ENCODE measurements at regions of chr2 and their contacts with region 1.

Region 1: DNA sequence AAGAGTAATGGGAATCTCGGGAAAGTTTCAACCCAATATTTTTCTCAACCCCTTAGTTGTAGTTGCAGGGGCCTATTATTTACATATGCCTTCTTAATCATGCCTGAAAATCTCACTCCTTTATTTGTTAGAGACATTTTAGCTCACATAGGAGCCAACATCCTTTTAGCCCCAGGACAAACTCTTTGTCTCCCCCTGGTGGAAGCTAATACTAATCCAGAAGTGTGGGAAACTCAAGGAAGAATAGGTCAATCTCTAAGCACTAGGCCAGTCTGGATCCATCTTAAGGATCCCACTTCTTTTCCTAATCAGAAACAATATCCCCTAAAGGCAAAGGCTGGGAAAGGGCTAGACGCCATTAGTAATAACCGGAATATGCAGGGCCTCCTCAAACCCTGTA is 550.9 kb upstream of the PKDCC start:
- DNase-seq: no peak
- ATAC-seq: peak in 1 of 3 donors; percentile 56
- H3K4me3 ChIP-seq: no peak overlapping the region
- H3K4me3 Mint-ChIP-seq: no peak overlapping the region
- H3K27ac ChIP-seq: no peak overlapping the region
- H3K27ac Mint-ChIP-seq: no peak overlapping the region
- H3K4me1 ChIP-seq: no peaks in the 10 kb centered on the region
- H3K4me1 Mint-ChIP-seq: no peaks in the 10 kb centered on the region
- H3K27me3 ChIP-seq: no peaks in the 10 kb centered on the region
- H3K27me3 Mint-ChIP-seq: peaks cover 0 to 2% of the 10 kb centered on the region in 2 donors
- CTCF ChIP-seq: peak; percentile 56

Region 2: DNA sequence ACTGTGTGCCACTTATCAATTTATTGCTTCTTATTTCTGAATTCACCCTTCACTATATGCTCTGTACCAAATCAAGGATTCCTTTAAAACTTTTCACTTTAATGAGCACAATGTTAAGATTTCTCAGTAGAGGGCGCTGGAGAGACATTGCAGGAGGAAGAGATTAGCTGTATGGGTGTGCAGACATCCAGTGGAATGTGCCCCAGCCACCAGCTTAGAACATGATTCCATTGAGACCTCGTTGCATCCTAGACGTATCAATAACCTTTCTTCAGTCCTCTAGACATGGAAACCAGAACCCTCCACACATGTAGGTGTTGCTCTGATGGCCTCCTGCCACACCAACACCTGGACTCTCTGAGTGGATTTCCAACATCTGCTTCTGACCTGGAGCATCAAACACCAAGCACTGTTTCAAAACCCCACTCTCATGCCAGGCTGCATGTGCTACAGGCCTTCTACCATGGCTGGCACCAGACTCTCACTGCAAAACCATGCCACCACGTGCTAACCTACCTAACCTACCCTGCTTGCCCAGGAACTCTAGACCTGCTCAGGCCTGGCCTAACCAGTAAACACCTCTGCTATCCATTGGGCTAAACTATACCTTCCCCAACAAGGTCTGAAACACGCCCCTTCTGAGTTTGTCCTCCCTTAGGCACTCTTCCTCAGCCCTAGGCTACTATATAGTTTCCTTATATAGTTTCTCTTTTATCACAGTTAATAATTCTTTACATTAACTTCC is 82.2 kb before region 1 on chr2:
- intact Hi-C with region 1: loop called (anchors 1 kb)
- DNase-seq: peak; percentile 8 to 14
- ATAC-seq: peak; percentile 46 to 81 (median 54)
- H3K4me3 ChIP-seq: no peak overlapping the region
- H3K4me3 Mint-ChIP-seq: no peak overlapping the region
- H3K27ac ChIP-seq: no peak overlapping the region
- H3K27ac Mint-ChIP-seq: peak overlapping the region in 1 of 2 donors; percentile 44
- H3K4me1 ChIP-seq: no peaks in the 10 kb centered on the region
- H3K4me1 Mint-ChIP-seq: peaks cover 8 to 9% of the 10 kb centered on the region in 2 donors
- H3K27me3 ChIP-seq: no peaks in the 10 kb centered on the region
- H3K27me3 Mint-ChIP-seq: peaks cover 3 to 5% of the 10 kb centered on the region in 2 donors
- CTCF ChIP-seq: peak; percentile 75

Region 3: GRCh38 chr2:41457033-41457432 is 39.9 kb before region 1 on chr2:
- intact Hi-C with region 1: loop called (anchors 1 kb)
- DNase-seq: no peak
- ATAC-seq: no peak
- H3K4me3 ChIP-seq: no peak overlapping the region
- H3K4me3 Mint-ChIP-seq: peak overlapping the region; percentile 77
- H3K27ac ChIP-seq: peak overlapping the region; percentile 96
- H3K27ac Mint-ChIP-seq: peak overlapping the region; percentile 77 to 96
- H3K4me1 ChIP-seq: peaks cover 24% of the 10 kb centered on the region
- H3K4me1 Mint-ChIP-seq: peaks cover 37 to 40% of the 10 kb centered on the region in 2 donors
- H3K27me3 ChIP-seq: no peaks in the 10 kb centered on the region
- H3K27me3 Mint-ChIP-seq: no peaks in the 10 kb centered on the region
- CTCF ChIP-seq: no peak